ENCODE measurements at regions of chr1 and their contacts with region 1.

Region 1: GRCh38 chr1:164772635-164773034 is 213.7 kb downstream of the PBX1 start:
- DNase-seq: peak; percentile 95
- H3K4me3 Mint-ChIP-seq: no peak overlapping the region
- H3K27ac Mint-ChIP-seq: peak overlapping the region; percentile 85
- H3K4me1 Mint-ChIP-seq: peaks cover 54% of the 10 kb centered on the region
- H3K27me3 Mint-ChIP-seq: no peaks in the 10 kb centered on the region
- CTCF ChIP-seq: no peak

Region 2: GRCh38 chr1:164563721-164564360 is 208.8 kb before region 1 on chr1:
- CTCF ChIA-PET with region 1: interaction called, 3 read pairs
- POLR2A ChIA-PET with region 1: interaction called, 50 read pairs
- intact Hi-C with region 1: loop called (anchors 2 kb)
- DNase-seq: peak; percentile 30
- H3K4me3 Mint-ChIP-seq: peak overlapping the region; percentile 89
- H3K27ac Mint-ChIP-seq: peak overlapping the region; percentile 99
- H3K4me1 Mint-ChIP-seq: peaks cover 33% of the 10 kb centered on the region
- H3K27me3 Mint-ChIP-seq: no peaks in the 10 kb centered on the region
- CTCF ChIP-seq: no peak

Region 3: DNA sequence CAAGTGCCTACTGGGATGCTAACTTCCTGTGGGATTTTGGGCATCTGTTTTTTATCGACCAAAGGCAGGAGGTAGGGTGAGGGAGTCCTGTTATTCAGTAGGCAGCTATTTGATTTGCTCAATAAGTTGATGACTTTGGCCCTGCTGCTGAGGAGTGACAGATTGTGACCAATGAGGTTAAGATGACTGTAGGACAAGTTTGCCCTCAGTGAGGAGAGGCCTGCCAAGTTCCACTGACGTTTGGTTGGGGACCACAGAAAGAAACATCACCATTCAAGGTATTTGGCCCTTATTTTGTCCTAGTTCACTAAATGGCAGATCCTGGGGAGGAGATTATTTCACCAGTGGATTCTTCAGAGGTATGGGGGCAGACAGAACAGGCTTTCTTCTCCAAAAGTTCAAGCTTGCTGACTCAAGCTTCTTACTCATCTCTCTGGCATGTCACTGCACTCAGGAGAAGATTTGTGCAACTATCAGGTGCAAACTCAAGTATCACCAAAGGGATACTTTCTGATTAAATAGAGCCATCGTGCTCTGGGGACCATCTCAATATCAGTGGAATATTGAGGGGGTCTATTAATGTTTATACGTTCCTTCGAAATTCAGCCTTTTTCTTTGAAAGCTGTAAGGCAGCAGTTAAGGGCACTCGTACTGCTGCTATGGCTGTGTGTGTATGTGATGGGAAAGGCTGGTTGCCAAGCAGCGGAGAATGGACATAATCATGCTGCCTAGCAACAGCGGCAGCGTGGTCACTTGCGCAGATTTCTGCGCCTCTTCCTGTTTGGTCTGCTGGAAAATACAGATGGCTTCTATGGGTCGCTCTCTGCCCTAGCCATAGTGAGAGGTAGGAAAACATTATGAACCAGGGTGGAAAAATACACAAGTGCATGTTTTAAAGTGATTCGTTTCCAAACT is 134.9 kb before region 1 on chr1:
- CTCF ChIA-PET with region 1: interaction called, 3 read pairs
- POLR2A ChIA-PET with region 1: interaction called, 5 read pairs
- intact Hi-C with region 1: loop called (anchors 5 kb)
- DNase-seq: peak; percentile 73
- H3K4me3 Mint-ChIP-seq: no peak overlapping the region
- H3K27ac Mint-ChIP-seq: peak overlapping the region; percentile 10
- H3K4me1 Mint-ChIP-seq: peaks cover 31% of the 10 kb centered on the region
- H3K27me3 Mint-ChIP-seq: no peaks in the 10 kb centered on the region
- CTCF ChIP-seq: no peak

Region 4: DNA sequence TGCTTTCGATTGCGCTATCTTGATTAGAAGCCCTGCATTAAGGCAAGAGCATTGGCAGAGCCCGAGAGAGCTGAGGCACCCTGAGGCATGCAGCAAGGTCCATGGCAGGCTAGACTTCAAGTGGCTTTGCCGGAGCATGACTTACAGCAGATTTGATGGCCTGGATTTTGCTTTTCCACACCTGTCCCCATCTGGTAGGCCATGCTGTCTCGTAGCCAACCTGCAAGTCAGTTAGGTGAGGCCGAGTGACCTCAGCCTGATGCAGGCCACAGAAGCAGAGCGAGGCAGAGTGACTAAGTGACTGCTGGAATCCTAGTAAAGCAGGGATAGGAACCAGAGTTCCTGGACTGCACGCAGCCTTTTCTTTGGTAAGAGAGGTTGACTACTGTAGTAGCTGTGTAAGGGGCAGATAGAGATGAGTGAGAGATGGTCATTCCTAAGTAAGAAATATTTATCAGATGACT is 64.7 kb before region 1 on chr1:
- CTCF ChIA-PET with region 1: interaction called, 4 read pairs
- POLR2A ChIA-PET with region 1: interaction called, 8 read pairs
- intact Hi-C with region 1: loop called (anchors 5 kb)
- DNase-seq: peak; percentile 67
- H3K4me3 Mint-ChIP-seq: no peak overlapping the region
- H3K27ac Mint-ChIP-seq: peak overlapping the region; percentile 70
- H3K4me1 Mint-ChIP-seq: peaks cover 22% of the 10 kb centered on the region
- H3K27me3 Mint-ChIP-seq: no peaks in the 10 kb centered on the region
- CTCF ChIP-seq: no peak

Region 5: DNA sequence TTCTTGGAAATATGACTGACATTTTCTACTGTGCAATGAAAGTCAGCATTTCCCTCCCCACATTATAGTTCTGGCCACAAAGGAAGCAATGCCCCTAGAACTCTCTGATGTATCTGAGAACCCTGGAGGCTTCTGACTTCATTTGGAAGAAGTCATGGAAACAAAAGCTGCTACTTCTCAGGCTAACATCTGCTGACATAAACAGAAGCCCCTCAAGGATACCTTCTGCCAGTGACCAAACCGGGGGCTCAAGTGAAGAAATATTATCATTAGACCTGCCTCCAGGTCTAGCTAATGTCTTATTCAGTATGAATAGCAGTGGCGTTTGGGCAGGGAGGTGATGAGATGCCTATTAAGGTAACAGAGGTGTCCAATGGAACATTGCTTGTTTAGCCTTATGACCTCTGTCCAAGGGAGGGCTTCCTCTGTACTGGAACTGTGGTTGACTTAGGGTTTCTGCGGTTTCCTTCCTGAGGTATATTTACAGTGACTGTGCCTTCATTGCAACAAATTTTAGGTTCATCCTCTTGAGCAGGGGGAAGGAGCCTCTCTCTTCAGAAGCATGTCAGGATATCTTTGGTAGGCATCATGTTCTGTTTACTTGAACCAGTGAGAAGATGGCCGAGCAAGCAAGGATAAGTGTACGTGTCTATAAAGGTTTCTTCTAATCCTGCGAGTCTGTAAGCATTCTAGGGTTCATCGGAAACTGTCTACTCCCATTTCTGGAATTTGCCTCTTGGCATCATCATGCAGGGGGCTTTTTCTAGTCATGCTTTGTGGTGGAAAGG is 52.0 kb before region 1 on chr1:
- CTCF ChIA-PET with region 1: no interaction called
- POLR2A ChIA-PET with region 1: interaction called, 10 read pairs
- intact Hi-C with region 1: no loop called
- DNase-seq: no peak
- H3K4me3 Mint-ChIP-seq: no peak overlapping the region
- H3K27ac Mint-ChIP-seq: peak overlapping the region; percentile 25
- H3K4me1 Mint-ChIP-seq: peaks cover 26% of the 10 kb centered on the region
- H3K27me3 Mint-ChIP-seq: no peaks in the 10 kb centered on the region
- CTCF ChIP-seq: no peak

Region 6: DNA sequence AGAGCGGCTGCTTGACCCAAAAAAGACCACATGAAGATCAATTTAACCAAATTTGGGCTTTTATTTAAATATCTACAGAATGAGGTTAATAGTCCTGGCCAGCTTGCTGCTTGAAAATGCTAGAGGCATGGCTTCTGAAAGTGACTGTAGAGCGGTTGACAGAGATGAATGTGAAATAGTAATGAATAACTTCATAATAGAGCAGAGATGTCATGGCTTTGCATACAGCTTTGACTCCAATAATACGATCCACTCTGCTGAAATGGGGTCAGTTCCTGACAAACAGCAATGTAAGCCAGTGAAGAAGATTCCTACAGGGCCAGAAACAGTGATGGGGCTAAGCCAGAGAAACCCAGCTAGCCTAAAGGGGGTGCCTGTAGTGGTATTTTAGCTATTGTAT is 29.9 kb before region 1 on chr1:
- CTCF ChIA-PET with region 1: no interaction called
- POLR2A ChIA-PET with region 1: no interaction called
- intact Hi-C with region 1: no loop called
- DNase-seq: no peak
- H3K4me3 Mint-ChIP-seq: no peak overlapping the region
- H3K27ac Mint-ChIP-seq: no peak overlapping the region
- H3K4me1 Mint-ChIP-seq: no peaks in the 10 kb centered on the region
- H3K27me3 Mint-ChIP-seq: no peaks in the 10 kb centered on the region
- CTCF ChIP-seq: no peak